BJ (cell line): ENCODE measurements at regions of chr1 and their contacts with region 1.

Region 1: GRCh38 chr1:94481473-94481933 is 60.1 kb downstream of the F3 start:
- DNase-seq: peak; percentile 3
- H3K4me3 ChIP-seq: no peak overlapping the region
- H3K27me3 ChIP-seq: no peaks in the 10 kb centered on the region
- CTCF ChIP-seq: peak; percentile 84

Region 2: DNA sequence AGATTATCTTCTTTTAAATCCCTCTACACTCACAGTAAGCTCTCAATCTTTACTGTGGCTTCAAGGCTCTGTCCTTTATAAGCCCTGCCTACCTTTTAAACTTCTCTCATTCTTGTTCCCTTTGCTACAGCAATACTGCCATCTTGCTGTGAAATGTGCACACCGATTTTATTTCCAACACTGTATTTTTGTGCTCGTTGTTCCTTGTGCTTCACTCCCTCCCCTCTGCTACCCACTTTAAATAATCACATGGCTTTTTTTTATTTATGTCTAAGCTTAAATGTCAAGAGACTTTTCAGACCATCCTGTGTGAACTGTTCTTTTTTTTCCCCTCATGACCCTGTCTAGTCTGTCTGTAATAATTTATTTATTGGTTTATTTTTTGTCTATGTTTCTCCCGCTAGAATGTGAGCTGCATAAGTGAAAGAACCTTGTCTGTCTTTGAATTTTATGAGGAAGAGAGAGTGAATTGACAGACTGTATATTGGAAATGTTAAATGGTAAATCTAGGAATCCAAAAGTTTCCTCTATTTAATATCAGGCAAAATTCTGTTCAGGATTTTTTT is 17.7 kb before region 1 on chr1:
- CTCF ChIA-PET with region 1: interaction called, 10 read pairs
- POLR2A ChIA-PET with region 1: no interaction called
- DNase-seq: peak; percentile 4
- H3K4me3 ChIP-seq: no peak overlapping the region
- H3K27me3 ChIP-seq: no peaks in the 10 kb centered on the region
- CTCF ChIP-seq: peak; percentile 63

Region 3: GRCh38 chr1:94471271-94471670 is 10.2 kb before region 1 on chr1:
- CTCF ChIA-PET with region 1: interaction called, 30 read pairs
- POLR2A ChIA-PET with region 1: no interaction called
- DNase-seq: no peak
- H3K4me3 ChIP-seq: no peak overlapping the region
- H3K27me3 ChIP-seq: no peaks in the 10 kb centered on the region
- CTCF ChIP-seq: no peak